Colonic mucosa (tissue), 4 donors: ENCODE measurements at regions of chr4 and their contacts with region 1.

Region 1: GRCh38 chr4:184395971-184396391 is 78.4 kb downstream of the IRF2 start:
- DNase-seq: no peak
- H3K4me3 ChIP-seq: no peak overlapping the region
- H3K27ac ChIP-seq: no peak overlapping the region
- H3K4me1 ChIP-seq: no peaks in the 10 kb centered on the region
- H3K27me3 ChIP-seq: no peaks in the 10 kb centered on the region
- CTCF ChIP-seq: no peak

Region 2: DNA sequence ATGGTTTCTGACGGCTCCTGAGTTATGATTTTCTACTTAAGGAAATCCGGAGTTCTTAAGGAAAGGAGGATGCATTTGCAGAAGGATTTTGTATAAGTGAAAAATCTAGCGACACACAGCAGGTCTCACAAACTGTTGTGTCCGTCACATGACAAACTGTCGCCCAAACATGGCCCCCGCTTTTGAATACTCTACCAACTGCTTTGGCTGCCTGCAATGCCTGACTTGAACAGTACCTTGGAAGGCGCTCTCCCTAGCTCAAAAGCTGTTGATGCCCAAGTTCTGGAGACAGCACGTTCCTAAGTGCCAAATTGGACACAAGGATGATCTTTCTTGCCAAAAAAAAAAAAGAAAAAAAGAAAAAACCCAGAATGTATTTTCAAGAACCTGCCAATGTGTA is 281.6 kb before region 1 on chr4:
- intact Hi-C with region 1: no loop called
- DNase-seq: no peak
- H3K4me3 ChIP-seq: no peak overlapping the region
- H3K27ac ChIP-seq: no peak overlapping the region
- H3K4me1 ChIP-seq: no peaks in the 10 kb centered on the region
- H3K27me3 ChIP-seq: no peaks in the 10 kb centered on the region
- CTCF ChIP-seq: no peak

Region 3: GRCh38 chr4:184282251-184282713 is 113.7 kb before region 1 on chr4:
- intact Hi-C with region 1: loop called (anchors 10 kb)
- DNase-seq: peak; percentile 75
- H3K4me3 ChIP-seq: no peak overlapping the region
- H3K27ac ChIP-seq: peak overlapping the region; percentile 61
- H3K4me1 ChIP-seq: peaks cover 9% of the 10 kb centered on the region
- H3K27me3 ChIP-seq: no peaks in the 10 kb centered on the region
- CTCF ChIP-seq: no peak

Region 4: DNA sequence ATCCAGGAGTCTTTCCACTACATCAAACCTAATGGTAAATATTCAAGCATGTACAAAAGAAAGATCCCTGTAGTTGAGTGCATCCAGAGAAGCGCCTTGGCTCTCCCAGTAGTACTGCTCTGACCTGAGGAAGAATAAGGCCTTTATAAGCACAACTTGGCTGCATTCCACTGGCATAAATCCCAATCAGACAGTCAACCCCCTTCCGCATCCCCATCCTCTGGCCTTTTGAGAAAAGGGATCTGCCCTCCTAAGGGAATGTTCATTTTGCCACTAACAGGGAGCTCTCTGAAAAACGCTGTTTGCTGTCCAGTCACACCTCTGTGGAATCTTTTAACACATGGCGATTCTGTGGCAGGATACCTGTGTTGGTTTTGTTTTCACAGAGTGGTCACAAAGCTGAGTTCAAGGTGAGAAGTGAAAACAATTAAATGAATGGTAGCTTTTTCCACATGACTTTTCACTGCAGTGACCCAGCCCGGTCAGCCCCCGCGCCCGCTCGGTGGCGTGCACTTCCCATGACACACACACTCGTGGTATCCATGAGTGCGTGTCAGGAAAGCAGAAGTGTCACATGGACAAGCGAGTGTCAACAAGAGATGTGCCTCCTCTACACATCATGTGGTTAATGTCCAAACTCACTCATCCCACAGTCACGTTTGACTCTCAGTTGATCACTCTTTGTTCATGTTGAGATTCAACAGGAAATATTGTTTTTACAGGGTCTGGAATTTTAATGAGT is 66.2 kb before region 1 on chr4:
- intact Hi-C with region 1: no loop called
- DNase-seq: no peak
- H3K4me3 ChIP-seq: no peak overlapping the region
- H3K27ac ChIP-seq: no peak overlapping the region
- H3K4me1 ChIP-seq: no peaks in the 10 kb centered on the region
- H3K27me3 ChIP-seq: no peaks in the 10 kb centered on the region
- CTCF ChIP-seq: no peak

Region 5: DNA sequence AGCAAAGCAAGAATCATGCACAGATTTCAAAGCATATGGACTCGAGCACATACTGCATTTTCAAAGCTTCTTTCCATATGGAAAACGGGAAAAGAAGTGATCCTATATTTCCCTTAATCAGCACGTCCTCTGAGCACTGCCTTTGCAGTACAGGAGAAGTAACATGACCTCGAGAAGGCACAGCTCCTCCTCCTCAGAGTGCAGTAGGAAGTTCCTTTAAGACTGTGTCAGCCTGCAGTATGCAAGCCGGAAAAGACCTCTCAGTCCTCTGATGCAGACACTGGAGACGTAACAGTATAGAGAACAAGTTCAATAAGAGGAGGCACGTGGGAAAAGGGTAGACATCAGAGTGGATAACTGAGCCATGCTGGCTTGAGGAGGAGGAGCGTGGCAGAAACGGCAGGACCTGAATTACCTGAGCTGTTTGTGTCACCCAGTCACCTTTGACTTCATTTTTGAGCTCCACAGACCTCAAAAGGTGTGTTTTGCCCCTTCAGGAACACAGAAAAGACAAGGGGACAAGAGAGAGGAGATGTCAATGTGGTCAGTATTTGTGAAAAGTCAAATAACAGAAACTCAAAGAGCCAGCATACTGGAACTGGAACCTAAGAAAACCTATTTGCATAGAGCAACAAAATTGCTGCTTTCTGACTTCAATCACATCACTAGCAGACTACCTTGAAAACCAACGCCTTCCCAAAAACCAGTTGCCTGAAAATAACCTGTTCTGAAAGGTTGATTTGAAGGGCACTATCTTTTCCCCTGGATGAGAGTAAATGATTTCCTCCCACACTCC is 57.6 kb after region 1 on chr4:
- intact Hi-C with region 1: loop called (anchors 10 kb)
- DNase-seq: peak; percentile 50
- H3K4me3 ChIP-seq: no peak overlapping the region
- H3K27ac ChIP-seq: peak overlapping the region; percentile 41
- H3K4me1 ChIP-seq: no peaks in the 10 kb centered on the region
- H3K27me3 ChIP-seq: no peaks in the 10 kb centered on the region
- CTCF ChIP-seq: no peak

Region 6: GRCh38 chr4:184599492-184600135 is 203.6 kb after region 1 on chr4:
- intact Hi-C with region 1: no loop called
- DNase-seq: no peak
- H3K4me3 ChIP-seq: no peak overlapping the region
- H3K27ac ChIP-seq: no peak overlapping the region
- H3K4me1 ChIP-seq: no peaks in the 10 kb centered on the region
- H3K27me3 ChIP-seq: no peaks in the 10 kb centered on the region
- CTCF ChIP-seq: no peak